PC-9 (cell line): ENCODE measurements at regions of chr12 and their contacts with region 1.

Region 1: GRCh38 chr12:49161092-49161795 is 27.6 kb downstream of the TUBA1A start:
- DNase-seq: no peak
- H3K4me3 ChIP-seq: no peak overlapping the region
- H3K27ac ChIP-seq: no peak overlapping the region
- H3K4me1 ChIP-seq: no peaks in the 10 kb centered on the region
- H3K27me3 ChIP-seq: no peaks in the 10 kb centered on the region
- CTCF ChIP-seq: no peak

Region 2: GRCh38 chr12:49188914-49189367 is 27.7 kb after region 1 on chr12 and contains the start of gene TUBA1A:
- CTCF ChIA-PET with region 1: no interaction called
- POLR2A ChIA-PET with region 1: interaction called, 30 read pairs
- intact Hi-C with region 1: no loop called
- DNase-seq: peak; percentile 66 to 71
- H3K4me3 ChIP-seq: peak within 1 kb of the TSS; percentile 94
- H3K27ac ChIP-seq: no peak within 1 kb of the TSS
- H3K4me1 ChIP-seq: no peaks in the 10 kb centered on the region; the same call in 1 of the 2 replicates
- H3K27me3 ChIP-seq: peaks cover 6% of the 10 kb centered on the region; the same call in 1 of the 2 replicates
- CTCF ChIP-seq: no peak
- total RNA-seq, gene TUBA1A: 14.1 and 14.2 TPM in 2 replicates